Dendritic cell treated with granulocyte-macrophage colony-stimulating factor and Interleukin-4, amounts not matched to agents 40 ng/mL and 50 ng/mL, for 4 days (primary cell): ENCODE measurements at regions of chr9 and their contacts with region 1.

Region 1: DNA sequence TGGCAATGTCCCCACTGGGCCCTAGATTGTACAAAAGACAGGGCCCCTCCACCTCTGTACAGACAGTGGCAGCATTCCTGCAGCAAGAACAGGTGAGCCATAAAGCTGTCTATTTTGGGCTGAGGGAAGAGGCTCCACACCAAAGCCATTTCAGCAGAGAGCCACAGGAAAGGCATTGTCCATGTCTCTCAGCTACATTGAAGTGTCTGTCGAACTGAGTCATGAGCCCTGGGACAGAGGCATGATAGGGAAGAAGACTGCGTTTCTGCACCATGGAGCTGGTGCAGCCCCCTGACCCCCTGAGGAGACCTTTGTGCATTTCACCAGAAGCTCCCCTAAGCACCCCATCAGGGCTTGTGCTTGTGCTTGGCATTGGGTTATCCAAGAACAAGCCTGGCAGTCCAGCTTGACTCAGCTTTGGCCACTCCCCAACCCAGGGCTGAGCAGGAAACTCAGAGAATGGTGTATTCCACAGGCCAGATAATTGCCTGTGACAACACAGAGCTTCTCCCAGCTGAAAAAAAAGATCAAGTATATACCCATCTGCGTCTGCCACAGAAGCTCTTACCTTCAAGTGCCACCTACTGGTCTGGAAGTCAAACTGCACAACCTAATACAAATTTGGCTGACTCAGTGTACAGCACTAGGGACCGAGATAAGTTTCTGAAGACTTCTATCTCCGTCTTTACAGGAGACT is 5.9 kb upstream of the FRMD3 start:
- H3K4me3 Mint-ChIP-seq: no peak overlapping the region
- H3K27ac Mint-ChIP-seq: no peak overlapping the region
- H3K4me1 Mint-ChIP-seq: no peaks in the 10 kb centered on the region
- H3K27me3 Mint-ChIP-seq: peaks cover 4% of the 10 kb centered on the region

Region 2: DNA sequence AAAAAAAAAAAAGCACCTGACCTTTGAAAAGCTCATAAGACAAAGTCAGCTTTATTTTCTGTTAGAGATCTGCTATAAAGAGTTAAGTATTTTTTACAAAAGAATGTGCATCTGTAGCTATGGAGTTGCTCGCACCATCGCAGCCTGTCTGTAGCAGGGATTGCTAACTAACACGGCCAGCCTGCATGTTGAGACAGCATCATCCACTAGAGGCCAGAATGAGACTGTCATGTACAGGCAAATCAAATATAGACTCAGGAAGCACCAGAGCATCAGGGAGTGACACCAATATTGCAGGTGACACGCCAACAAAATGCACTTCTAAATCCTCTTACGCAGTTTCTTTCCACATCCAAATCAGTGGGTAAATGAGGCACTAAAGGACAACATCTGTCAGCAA is 344.9 kb before region 1 on chr9:
- intact Hi-C with region 1: no loop called
- H3K4me3 Mint-ChIP-seq: no peak overlapping the region
- H3K27ac Mint-ChIP-seq: no peak overlapping the region
- H3K4me1 Mint-ChIP-seq: no peaks in the 10 kb centered on the region
- H3K27me3 Mint-ChIP-seq: peaks cover 6% of the 10 kb centered on the region

Region 3: DNA sequence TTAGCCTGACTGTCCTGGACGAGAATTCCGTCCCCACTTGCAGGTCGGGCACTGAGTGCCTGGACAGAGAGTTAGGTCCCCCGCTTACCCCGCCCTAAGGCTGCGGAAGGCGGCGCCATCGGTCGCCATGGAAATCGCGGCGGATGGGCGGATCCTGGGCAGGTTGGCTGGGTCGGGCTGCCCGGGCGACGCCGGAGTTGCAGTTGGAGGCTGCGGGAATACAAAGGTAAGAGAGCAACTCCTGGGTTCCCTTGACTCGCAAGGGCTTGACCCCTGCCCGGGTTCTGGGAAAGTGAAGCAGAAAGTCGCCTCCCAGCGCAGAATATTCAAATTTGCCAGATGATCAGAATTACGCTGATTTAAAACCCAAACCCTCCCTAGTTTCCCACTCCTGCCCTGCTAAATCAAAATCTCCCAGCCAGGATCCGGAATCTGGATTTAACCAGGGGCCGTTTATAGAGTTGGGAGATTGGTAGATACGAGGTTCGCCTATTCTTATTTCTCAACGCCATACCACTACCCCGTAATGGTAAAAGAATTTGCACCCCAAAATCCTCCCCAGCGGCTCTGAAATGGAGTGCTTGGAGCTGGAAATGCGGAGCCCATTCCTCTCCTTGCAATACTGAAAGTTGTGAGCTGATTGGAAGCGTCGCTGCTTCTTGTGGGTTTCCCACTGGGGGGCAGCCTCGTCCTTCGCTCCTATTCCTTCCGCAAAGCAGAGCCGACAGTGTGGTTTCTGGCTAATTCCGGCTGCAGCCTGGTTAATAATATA is 324.8 kb before region 1 on chr9:
- intact Hi-C with region 1: loop called (anchors 10 kb)
- H3K4me3 Mint-ChIP-seq: peak overlapping the region; percentile 91
- H3K27ac Mint-ChIP-seq: peak overlapping the region; percentile 85
- H3K4me1 Mint-ChIP-seq: peaks cover 14% of the 10 kb centered on the region
- H3K27me3 Mint-ChIP-seq: peaks cover 20% of the 10 kb centered on the region

Region 4: DNA sequence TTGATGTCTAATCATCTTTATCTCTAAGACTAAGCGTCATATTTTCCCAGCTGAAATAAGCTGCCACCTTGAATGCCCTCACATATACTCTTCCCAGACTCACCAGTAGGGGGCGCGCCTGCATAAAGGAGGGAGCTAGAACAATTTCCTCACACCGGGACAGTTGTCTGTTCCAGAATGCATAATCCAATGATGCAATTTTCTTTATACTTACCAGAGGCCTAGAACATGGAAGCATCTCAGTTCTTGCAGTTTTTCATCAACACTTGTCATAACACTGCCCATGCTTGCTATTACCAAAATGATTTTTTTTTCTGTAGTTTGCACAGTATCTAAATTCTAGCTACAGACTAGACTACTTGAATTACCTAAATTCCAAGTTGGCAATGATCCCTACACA is 209.8 kb before region 1 on chr9:
- intact Hi-C with region 1: loop called (anchors 1 kb)
- H3K4me3 Mint-ChIP-seq: no peak overlapping the region
- H3K27ac Mint-ChIP-seq: no peak overlapping the region
- H3K4me1 Mint-ChIP-seq: no peaks in the 10 kb centered on the region
- H3K27me3 Mint-ChIP-seq: no peaks in the 10 kb centered on the region